ENCODE measurements at regions of chr17 and their contacts with region 1.

Region 1: GRCh38 chr17:27601069-27601975 is 29.7 kb upstream of the LGALS9 start:
- DNase-seq: peak; percentile 51
- ATAC-seq: peak; percentile 53
- H3K4me3 ChIP-seq: no peak overlapping the region
- H3K27ac ChIP-seq: no peak overlapping the region
- H3K4me1 ChIP-seq: peaks cover 5% of the 10 kb centered on the region; the same call in 1 of the 2 replicates
- H3K27me3 ChIP-seq: no peaks in the 10 kb centered on the region
- CTCF ChIP-seq: peak; percentile 85 to 98 (median 97)
- EP300 ChIP-seq: no peak
- POLR2A ChIP-seq: no peak
- RAD21 ChIP-seq: peak; percentile 95

Region 2: GRCh38 chr17:27199948-27200347 is 401.4 kb before region 1 on chr17:
- CTCF ChIA-PET with region 1: interaction called, 15 read pairs
- POLR2A ChIA-PET with region 1: no interaction called
- RAD21 ChIA-PET with region 1: interaction called, 3 read pairs
- SMC1A ChIA-PET with region 1: no interaction called
- in situ Hi-C with region 1: no loop called
- intact Hi-C with region 1: no loop called
- DNase-seq: no peak
- ATAC-seq: no peak
- H3K4me3 ChIP-seq: no peak overlapping the region
- H3K27ac ChIP-seq: no peak overlapping the region
- H3K4me1 ChIP-seq: no peaks in the 10 kb centered on the region
- H3K27me3 ChIP-seq: no peaks in the 10 kb centered on the region
- CTCF ChIP-seq: no peak
- EP300 ChIP-seq: no peak
- POLR2A ChIP-seq: no peak
- RAD21 ChIP-seq: no peak

Region 3: DNA sequence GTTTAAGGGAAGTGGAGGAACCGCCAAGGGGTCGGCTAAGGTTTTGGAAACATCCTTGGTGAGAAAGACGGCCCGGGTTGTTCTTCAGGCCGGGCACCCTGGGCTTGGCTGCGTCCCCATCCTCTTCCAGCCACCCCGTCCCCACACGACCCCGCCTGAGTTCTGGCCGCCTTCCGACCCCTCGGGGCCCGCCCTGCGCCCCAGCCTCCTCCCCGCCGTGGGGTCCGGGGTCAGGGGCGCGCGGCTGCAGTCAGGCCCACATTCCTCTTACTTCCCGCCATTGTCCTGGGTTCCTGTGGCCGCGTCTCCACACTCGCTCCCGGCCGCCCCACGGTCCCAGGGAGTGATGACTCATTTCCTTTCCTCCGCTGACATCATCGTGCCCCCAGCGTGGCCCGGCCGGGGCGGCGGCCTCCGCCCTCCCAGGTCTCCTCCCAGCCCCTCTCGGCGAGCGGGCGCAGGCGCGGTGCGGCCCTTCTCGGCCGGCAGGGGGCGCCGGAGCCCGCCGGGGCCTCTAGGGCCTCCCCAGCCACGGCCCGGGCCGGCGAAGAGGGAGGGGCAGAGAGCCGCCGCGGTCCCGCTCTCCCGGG is 247.8 kb before region 1 on chr17:
- CTCF ChIA-PET with region 1: interaction called, 45 read pairs
- POLR2A ChIA-PET with region 1: no interaction called
- RAD21 ChIA-PET with region 1: interaction called, 25 read pairs
- SMC1A ChIA-PET with region 1: interaction called, 43 read pairs
- in situ Hi-C with region 1: loop called (anchors 5 kb)
- intact Hi-C with region 1: loop called (anchors 1 kb)
- DNase-seq: peak; percentile 42
- ATAC-seq: peak; percentile 94
- H3K4me3 ChIP-seq: peak overlapping the region; percentile 73
- H3K27ac ChIP-seq: peak overlapping the region; percentile 70
- H3K4me1 ChIP-seq: peaks cover 7% of the 10 kb centered on the region
- H3K27me3 ChIP-seq: no peaks in the 10 kb centered on the region
- CTCF ChIP-seq: peak; percentile 63 to 93 (median 89); a peak in 4 of 6 replicates
- EP300 ChIP-seq: peak in 1 of 2 experiments; percentile 39; a peak in 2 of 4 replicates
- POLR2A ChIP-seq: peak; percentile 85
- RAD21 ChIP-seq: peak; percentile 73

Region 4: GRCh38 chr17:27413792-27414191 is 187.5 kb before region 1 on chr17:
- CTCF ChIA-PET with region 1: interaction called, 16 read pairs
- POLR2A ChIA-PET with region 1: no interaction called
- RAD21 ChIA-PET with region 1: interaction called, 3 read pairs
- SMC1A ChIA-PET with region 1: interaction called, 8 read pairs
- in situ Hi-C with region 1: no loop called
- intact Hi-C with region 1: no loop called
- DNase-seq: no peak
- ATAC-seq: peak; percentile 74
- H3K4me3 ChIP-seq: no peak overlapping the region
- H3K27ac ChIP-seq: no peak overlapping the region
- H3K4me1 ChIP-seq: peaks cover 14% of the 10 kb centered on the region
- H3K27me3 ChIP-seq: peaks cover 1 to 2% of the 10 kb centered on the region in 2 experiments; a peak in 1 of 4 replicates
- CTCF ChIP-seq: no peak
- EP300 ChIP-seq: no peak
- POLR2A ChIP-seq: no peak
- RAD21 ChIP-seq: no peak

Region 5: GRCh38 chr17:27466743-27467375 is 134.5 kb before region 1 on chr17:
- CTCF ChIA-PET with region 1: interaction called, 56 read pairs
- POLR2A ChIA-PET with region 1: interaction called, 4 read pairs
- RAD21 ChIA-PET with region 1: interaction called, 19 read pairs
- SMC1A ChIA-PET with region 1: interaction called, 6 read pairs
- in situ Hi-C with region 1: no loop called
- intact Hi-C with region 1: no loop called
- DNase-seq: peak; percentile 87
- ATAC-seq: peak; percentile 79
- H3K4me3 ChIP-seq: peak overlapping the region; percentile 54
- H3K27ac ChIP-seq: peak overlapping the region; percentile 92
- H3K4me1 ChIP-seq: peaks cover 67% of the 10 kb centered on the region
- H3K27me3 ChIP-seq: no peaks in the 10 kb centered on the region
- CTCF ChIP-seq: 0 out of 6 replicates have a peak, but pooled peaks of 1 of the 3 experiments have one; percentile 4
- EP300 ChIP-seq: peak; percentile 26 to 90; a peak in 3 of 4 replicates
- POLR2A ChIP-seq: peak; percentile 47; the same call in 1 of the 2 replicates
- RAD21 ChIP-seq: no peak; the same call in 1 of the 2 replicates

Region 6: DNA sequence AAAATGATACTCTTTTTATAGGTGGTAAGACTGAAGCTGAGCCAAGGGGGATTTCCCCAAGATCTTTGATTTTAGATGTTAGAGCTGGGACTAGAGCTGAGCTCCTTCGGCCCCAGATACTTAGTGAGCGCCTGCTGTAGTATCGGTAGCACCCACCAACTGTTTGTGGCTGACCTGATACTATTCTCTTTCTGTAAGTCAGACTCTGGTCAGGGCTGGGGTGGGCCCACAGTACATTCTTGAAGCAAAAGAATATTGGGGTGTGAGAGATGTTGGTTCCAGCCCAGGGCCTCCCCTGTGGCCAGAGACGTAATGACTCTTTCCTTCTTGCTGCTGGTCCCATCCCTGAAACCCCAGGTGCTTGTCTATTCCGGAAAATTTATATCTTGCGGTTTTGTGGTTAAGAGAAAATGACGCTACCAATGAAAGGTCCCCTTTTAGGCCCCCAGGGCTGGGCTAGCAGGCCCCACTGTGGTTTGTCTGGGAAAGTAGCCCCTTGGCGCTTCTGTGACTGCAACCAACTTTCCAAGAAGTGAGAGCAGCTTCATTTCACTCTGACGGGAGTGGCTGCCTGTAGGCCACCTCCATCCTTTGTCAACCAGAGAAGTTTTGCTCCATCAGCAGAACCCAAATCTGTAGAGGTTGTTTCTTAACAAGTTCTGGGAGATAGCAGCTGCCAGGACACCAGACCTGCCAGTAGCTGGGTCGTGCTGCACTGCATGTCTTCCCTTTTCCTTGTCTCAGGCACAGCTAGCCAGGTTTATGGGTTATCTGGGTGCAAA is 56.8 kb before region 1 on chr17:
- CTCF ChIA-PET with region 1: interaction called, 60 read pairs
- POLR2A ChIA-PET with region 1: no interaction called
- RAD21 ChIA-PET with region 1: interaction called, 9 read pairs
- SMC1A ChIA-PET with region 1: interaction called, 24 read pairs
- in situ Hi-C with region 1: loop called (anchors 10 kb)
- intact Hi-C with region 1: no loop called
- DNase-seq: peak; percentile 96
- ATAC-seq: peak; percentile 86
- H3K4me3 ChIP-seq: no peak overlapping the region
- H3K27ac ChIP-seq: peak overlapping the region; percentile 48; the same call in 1 of the 2 replicates
- H3K4me1 ChIP-seq: peaks cover 68% of the 10 kb centered on the region
- H3K27me3 ChIP-seq: no peaks in the 10 kb centered on the region
- CTCF ChIP-seq: peak; percentile 12 to 31 (median 23); a peak in 4 of 6 replicates
- EP300 ChIP-seq: peak; percentile 90 to 95
- POLR2A ChIP-seq: no peak
- RAD21 ChIP-seq: no peak

Region 7: GRCh38 chr17:27586203-27586721 is 15.1 kb before region 1 on chr17:
- CTCF ChIA-PET with region 1: interaction called, 28 read pairs
- POLR2A ChIA-PET with region 1: no interaction called
- RAD21 ChIA-PET with region 1: interaction called, 9 read pairs
- SMC1A ChIA-PET with region 1: interaction called, 16 read pairs
- in situ Hi-C with region 1: no loop called
- intact Hi-C with region 1: no loop called
- DNase-seq: no peak
- ATAC-seq: no peak
- H3K4me3 ChIP-seq: no peak overlapping the region
- H3K27ac ChIP-seq: no peak overlapping the region
- H3K4me1 ChIP-seq: peaks cover 5% of the 10 kb centered on the region; the same call in 1 of the 2 replicates
- H3K27me3 ChIP-seq: no peaks in the 10 kb centered on the region
- CTCF ChIP-seq: no peak
- EP300 ChIP-seq: no peak
- POLR2A ChIP-seq: no peak
- RAD21 ChIP-seq: no peak